ENCODE measurements at regions of chr3 and their contacts with region 1.

Region 1: GRCh38 chr3:20340324-20340928 is 154.4 kb upstream of the SGO1 start:
- DNase-seq: peak; percentile 26 to 53
- ATAC-seq: peak; percentile 53 to 84 (median 74)
- H3K4me3 ChIP-seq: no peak overlapping the region
- H3K27ac ChIP-seq: no peak overlapping the region
- H3K4me1 ChIP-seq: no peaks in the 10 kb centered on the region
- H3K27me3 ChIP-seq: no peaks in the 10 kb centered on the region
- CTCF ChIP-seq: peak; percentile 91

Region 2: DNA sequence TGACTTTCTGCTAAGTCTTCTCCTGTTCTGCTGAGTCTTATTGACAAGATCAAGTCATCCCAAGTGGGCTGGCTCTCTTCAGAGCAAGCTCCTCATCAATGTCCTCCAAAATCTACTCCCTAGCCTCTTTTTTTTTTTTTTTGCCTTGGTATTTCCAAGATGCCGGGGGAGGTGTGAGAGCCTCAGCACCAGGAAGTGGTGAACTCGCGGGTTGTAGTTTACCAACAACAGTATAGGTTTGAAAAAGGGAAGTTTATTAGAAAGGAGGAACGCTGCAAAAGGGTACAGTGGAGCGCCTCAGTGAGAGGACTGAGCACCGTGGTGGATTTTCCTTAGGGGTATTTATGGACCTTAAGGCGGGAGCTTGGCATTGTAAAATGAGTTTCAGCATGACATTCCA is 60.2 kb before region 1 on chr3:
- intact Hi-C with region 1: no loop called
- DNase-seq: no peak
- ATAC-seq: no peak
- H3K4me3 ChIP-seq: no peak overlapping the region
- H3K27ac ChIP-seq: no peak overlapping the region
- H3K4me1 ChIP-seq: no peaks in the 10 kb centered on the region
- H3K27me3 ChIP-seq: no peaks in the 10 kb centered on the region
- CTCF ChIP-seq: no peak

Region 3: GRCh38 chr3:22117751-22118346 is 1777.4 kb after region 1 on chr3:
- intact Hi-C with region 1: loop called (anchors 5 to 10 kb)
- DNase-seq: no peak
- ATAC-seq: peak in 1 of 4 donors; percentile 63
- H3K4me3 ChIP-seq: no peak overlapping the region
- H3K27ac ChIP-seq: no peak overlapping the region
- H3K4me1 ChIP-seq: peaks cover 4% of the 10 kb centered on the region
- H3K27me3 ChIP-seq: no peaks in the 10 kb centered on the region
- CTCF ChIP-seq: peak; percentile 77

Measured in psoas muscle (tissue), 8 donors.